ENCODE measurements at regions of chr12 and their contacts with region 1.

Region 1: DNA sequence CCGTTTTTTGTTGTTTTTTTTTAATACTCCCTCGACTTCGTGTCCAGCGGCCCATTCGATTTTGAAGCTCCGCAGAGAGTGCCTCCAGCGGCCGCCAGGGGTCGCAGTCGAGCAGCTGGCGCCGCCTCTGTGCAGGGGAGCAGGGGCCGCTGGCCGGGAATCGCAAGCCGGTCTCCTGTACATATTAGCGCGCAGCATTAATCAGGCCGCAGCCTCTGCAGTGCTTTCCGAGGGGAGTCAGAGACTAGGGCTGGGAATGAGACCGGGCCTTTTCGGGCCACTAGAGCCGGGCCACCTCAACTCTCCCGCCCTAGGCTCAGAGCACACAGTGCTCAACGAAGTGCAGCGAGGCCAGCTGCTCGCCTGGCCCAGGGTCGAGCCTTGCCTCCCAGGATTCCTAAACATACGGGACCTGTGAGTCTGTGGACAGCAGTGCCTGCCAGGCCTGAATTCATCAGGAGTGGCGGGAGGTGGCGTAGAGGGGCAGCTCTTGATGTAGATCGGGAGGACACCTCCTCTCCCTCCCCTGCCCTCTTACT is 81.8 kb downstream of the EMP1 start:
- DNase-seq: peak; percentile 65
- H3K4me3 Mint-ChIP-seq: no peak overlapping the region
- H3K27ac Mint-ChIP-seq: no peak overlapping the region
- H3K4me1 Mint-ChIP-seq: no peaks in the 10 kb centered on the region
- H3K27me3 Mint-ChIP-seq: peaks cover 34% of the 10 kb centered on the region
- CTCF ChIP-seq: peak; percentile 91

Region 2: GRCh38 chr12:13179211-13180074 is 98.9 kb before region 1 on chr12:
- CTCF ChIA-PET with region 1: no interaction called
- POLR2A ChIA-PET with region 1: no interaction called
- intact Hi-C with region 1: no loop called
- DNase-seq: peak; percentile 64
- H3K4me3 Mint-ChIP-seq: peak overlapping the region; percentile 49
- H3K27ac Mint-ChIP-seq: peak overlapping the region; percentile 69
- H3K4me1 Mint-ChIP-seq: peaks cover 24% of the 10 kb centered on the region
- H3K27me3 Mint-ChIP-seq: no peaks in the 10 kb centered on the region
- CTCF ChIP-seq: no peak

Region 3: DNA sequence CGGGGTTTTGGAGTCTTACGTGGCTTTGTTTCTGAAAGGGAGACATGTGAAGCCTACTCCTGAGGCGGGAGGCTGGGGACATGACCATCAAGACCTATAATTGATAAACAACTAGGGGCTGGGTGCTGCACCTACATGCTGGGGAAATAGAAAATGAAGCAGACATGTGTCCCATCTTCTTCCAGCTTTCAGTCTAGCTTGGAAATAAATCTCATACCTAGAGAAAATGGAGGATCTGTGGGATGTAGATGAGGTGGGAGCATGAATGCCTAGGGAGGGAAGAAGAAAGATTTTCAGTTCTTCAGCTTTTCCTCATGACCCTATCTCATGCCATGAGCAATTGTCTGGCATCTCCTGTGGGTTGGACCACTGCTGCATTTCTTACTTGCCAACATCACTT is 59.7 kb before region 1 on chr12:
- CTCF ChIA-PET with region 1: no interaction called
- POLR2A ChIA-PET with region 1: no interaction called
- intact Hi-C with region 1: no loop called
- DNase-seq: no peak
- H3K4me3 Mint-ChIP-seq: no peak overlapping the region
- H3K27ac Mint-ChIP-seq: no peak overlapping the region
- H3K4me1 Mint-ChIP-seq: peaks cover 34% of the 10 kb centered on the region
- H3K27me3 Mint-ChIP-seq: no peaks in the 10 kb centered on the region
- CTCF ChIP-seq: no peak

Region 4: DNA sequence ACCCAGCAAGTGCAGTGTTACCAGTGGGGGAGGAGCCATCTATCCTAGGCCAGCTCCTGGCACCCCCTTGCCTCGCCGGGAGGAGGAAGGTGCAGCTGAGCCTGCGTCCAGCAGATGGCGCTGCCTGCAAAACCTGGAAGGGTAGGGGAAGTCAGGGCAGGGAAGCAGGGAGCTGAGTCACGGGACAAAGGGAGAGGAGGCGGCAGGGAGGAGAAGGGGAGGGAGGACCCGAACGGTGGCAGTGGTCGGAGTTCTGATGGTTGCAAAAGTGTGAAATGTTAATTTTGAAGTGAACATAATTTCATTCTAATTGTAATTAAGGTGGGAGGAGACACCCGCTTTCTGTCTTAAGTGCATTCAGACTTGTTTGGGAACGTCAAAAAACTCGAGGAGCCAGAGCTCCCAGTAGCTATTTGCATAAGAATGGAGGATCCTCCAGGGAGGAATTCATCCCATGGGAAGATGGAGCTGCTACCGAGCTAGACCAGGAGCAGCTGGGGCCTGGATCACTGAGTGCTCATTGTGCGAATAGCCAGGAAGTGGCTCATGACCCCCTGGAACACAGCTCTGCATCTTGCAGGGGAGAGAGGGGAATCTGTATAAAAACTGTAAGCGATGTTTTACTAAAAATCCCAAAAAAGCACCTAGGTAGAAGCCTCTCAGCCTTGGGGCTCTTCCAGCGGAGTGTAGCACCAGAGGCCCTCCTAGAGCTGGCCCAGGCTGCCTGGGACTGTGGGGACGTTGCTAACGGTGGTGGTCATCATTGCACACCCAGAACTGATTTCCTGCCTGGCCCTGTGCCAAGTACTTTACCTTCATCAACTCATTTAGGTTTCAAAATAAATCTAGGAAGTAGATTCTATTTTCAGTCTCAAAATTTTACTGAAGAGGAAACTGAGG is 22.3 kb before region 1 on chr12:
- CTCF ChIA-PET with region 1: interaction called, 32 read pairs
- POLR2A ChIA-PET with region 1: no interaction called
- intact Hi-C with region 1: no loop called
- DNase-seq: peak; percentile 96
- H3K4me3 Mint-ChIP-seq: peak overlapping the region; percentile 68
- H3K27ac Mint-ChIP-seq: peak overlapping the region; percentile 75
- H3K4me1 Mint-ChIP-seq: peaks cover 6% of the 10 kb centered on the region
- H3K27me3 Mint-ChIP-seq: no peaks in the 10 kb centered on the region
- CTCF ChIP-seq: peak; percentile 89

Region 5: GRCh38 chr12:13362260-13362841 is 84.0 kb after region 1 on chr12:
- CTCF ChIA-PET with region 1: interaction called, 8 read pairs
- POLR2A ChIA-PET with region 1: no interaction called
- intact Hi-C with region 1: loop called (anchors 5 kb)
- DNase-seq: peak; percentile 80
- H3K4me3 Mint-ChIP-seq: no peak overlapping the region
- H3K27ac Mint-ChIP-seq: no peak overlapping the region
- H3K4me1 Mint-ChIP-seq: peaks cover 5% of the 10 kb centered on the region
- H3K27me3 Mint-ChIP-seq: peaks cover 51% of the 10 kb centered on the region
- CTCF ChIP-seq: peak; percentile 67

Region 6: DNA sequence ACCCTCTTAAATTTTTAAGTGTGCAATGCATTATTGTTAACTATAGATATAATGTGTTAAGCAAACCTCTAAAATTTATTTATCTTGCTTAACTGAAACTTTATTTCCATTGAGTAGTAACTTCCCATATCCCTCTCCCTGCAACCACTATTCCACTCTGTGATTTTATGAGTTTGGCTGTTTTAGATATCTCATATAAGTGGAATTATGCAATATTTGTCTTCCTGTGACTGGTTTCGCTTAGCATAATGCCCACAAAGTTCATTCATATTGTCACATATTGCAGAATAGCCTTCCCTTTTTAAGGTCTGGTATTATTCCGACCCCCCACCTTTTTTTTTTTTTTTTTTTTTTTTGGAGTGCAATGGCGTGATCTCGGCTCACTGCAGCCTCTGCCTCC is 165.8 kb after region 1 on chr12:
- CTCF ChIA-PET with region 1: no interaction called
- POLR2A ChIA-PET with region 1: no interaction called
- intact Hi-C with region 1: no loop called
- DNase-seq: no peak
- H3K4me3 Mint-ChIP-seq: no peak overlapping the region
- H3K27ac Mint-ChIP-seq: no peak overlapping the region
- H3K4me1 Mint-ChIP-seq: no peaks in the 10 kb centered on the region
- H3K27me3 Mint-ChIP-seq: no peaks in the 10 kb centered on the region
- CTCF ChIP-seq: no peak

Region 7: DNA sequence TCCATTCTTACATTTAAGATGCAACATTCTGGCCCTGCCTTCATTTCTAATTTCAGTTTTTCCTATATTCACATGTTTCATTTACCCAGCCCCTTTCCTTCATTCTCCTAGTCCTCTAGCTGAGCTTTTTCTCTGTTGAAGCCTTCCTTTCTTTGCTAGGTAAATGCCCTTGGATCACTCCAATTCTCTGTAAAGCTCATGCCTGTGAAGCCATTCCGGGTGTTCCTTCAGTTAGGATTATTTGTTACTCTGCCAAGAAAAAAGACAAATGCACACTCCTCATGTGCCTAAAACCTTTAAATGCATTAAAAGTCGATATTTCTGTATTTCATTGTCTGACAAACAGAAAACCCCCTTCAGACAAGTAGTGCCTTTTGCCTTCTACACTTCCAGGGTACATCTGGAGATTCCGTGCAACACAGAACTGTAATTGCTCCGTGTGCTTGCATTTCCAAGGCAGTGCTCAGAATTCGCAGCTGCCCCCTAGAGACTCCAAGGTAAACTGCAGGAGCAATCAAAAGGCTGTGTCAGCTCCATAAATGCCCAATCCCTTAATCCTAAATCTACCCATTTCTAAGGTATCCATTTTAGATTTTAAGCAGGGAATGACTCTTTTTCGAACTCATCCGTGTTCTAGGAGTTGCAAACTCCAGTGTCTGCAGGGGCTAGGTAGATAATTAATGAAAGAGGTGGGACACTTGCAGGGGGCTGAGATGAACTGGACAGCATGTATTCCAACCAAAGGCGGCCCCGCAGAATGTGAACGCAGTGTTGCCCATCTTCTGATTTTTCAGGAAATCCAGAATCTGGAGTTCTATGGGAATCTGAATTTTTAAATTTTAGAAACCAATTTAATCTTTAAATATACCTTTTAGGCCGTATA is 382.9 kb after region 1 on chr12:
- CTCF ChIA-PET with region 1: interaction called, 28 read pairs
- POLR2A ChIA-PET with region 1: interaction called, 5 read pairs
- intact Hi-C with region 1: loop called (anchors 1 kb)
- DNase-seq: peak; percentile 62
- H3K4me3 Mint-ChIP-seq: no peak overlapping the region
- H3K27ac Mint-ChIP-seq: no peak overlapping the region
- H3K4me1 Mint-ChIP-seq: no peaks in the 10 kb centered on the region
- H3K27me3 Mint-ChIP-seq: peaks cover 32% of the 10 kb centered on the region
- CTCF ChIP-seq: peak; percentile 73

Region 8: GRCh38 chr12:13941258-13942249 is 663.2 kb after region 1 on chr12:
- CTCF ChIA-PET with region 1: interaction called, 13 read pairs
- POLR2A ChIA-PET with region 1: interaction called, 5 read pairs
- intact Hi-C with region 1: loop called (anchors 1 kb)
- DNase-seq: peak; percentile 80
- H3K4me3 Mint-ChIP-seq: no peak overlapping the region
- H3K27ac Mint-ChIP-seq: no peak overlapping the region
- H3K4me1 Mint-ChIP-seq: no peaks in the 10 kb centered on the region
- H3K27me3 Mint-ChIP-seq: no peaks in the 10 kb centered on the region
- CTCF ChIP-seq: peak; percentile 41